ENCODE measurements at regions of chr5 and their contacts with region 1.

Region 1: GRCh38 chr5:76175051-76175666 is 92.0 kb downstream of the SV2C start:
- DNase-seq: peak; percentile 80
- H3K4me3 ChIP-seq: peak overlapping the region in 1 of 2 experiments; percentile 6; a peak in 2 of 4 replicates
- H3K27ac ChIP-seq: peak overlapping the region in 1 of 2 experiments; percentile 85; a peak in 2 of 4 replicates
- H3K4me1 ChIP-seq: peaks cover 0 to 37% of the 10 kb centered on the region in 2 experiments; a peak in 2 of 4 replicates
- H3K27me3 ChIP-seq: no peaks in the 10 kb centered on the region
- CTCF ChIP-seq: peak; percentile 89
- EP300 ChIP-seq: no peak
- RAD21 ChIP-seq: peak; percentile 92

Region 2: GRCh38 chr5:75824323-75824722 is 350.8 kb before region 1 on chr5:
- CTCF ChIA-PET with region 1: no interaction called
- POLR2A ChIA-PET with region 1: no interaction called
- DNase-seq: no peak
- H3K4me3 ChIP-seq: no peak overlapping the region
- H3K27ac ChIP-seq: no peak overlapping the region
- H3K4me1 ChIP-seq: no peaks in the 10 kb centered on the region; a peak in 1 of 4 replicates
- H3K27me3 ChIP-seq: no peaks in the 10 kb centered on the region
- CTCF ChIP-seq: no peak
- EP300 ChIP-seq: no peak
- RAD21 ChIP-seq: no peak

Region 3: GRCh38 chr5:75885849-75886598 is 289.1 kb before region 1 on chr5:
- CTCF ChIA-PET with region 1: interaction called, 44 read pairs
- POLR2A ChIA-PET with region 1: interaction called, 8 read pairs
- DNase-seq: peak; percentile 17
- H3K4me3 ChIP-seq: no peak overlapping the region
- H3K27ac ChIP-seq: no peak overlapping the region
- H3K4me1 ChIP-seq: peaks cover 0 to 4% of the 10 kb centered on the region in 2 experiments; a peak in 2 of 4 replicates
- H3K27me3 ChIP-seq: no peaks in the 10 kb centered on the region
- CTCF ChIP-seq: 0 out of 2 replicates have a peak, but pooled peaks have one; percentile 19
- EP300 ChIP-seq: no peak
- RAD21 ChIP-seq: peak; percentile 80

Region 4: GRCh38 chr5:76104027-76104426 is 71.1 kb before region 1 on chr5:
- CTCF ChIA-PET with region 1: interaction called, 12 read pairs
- POLR2A ChIA-PET with region 1: no interaction called
- DNase-seq: no peak
- H3K4me3 ChIP-seq: no peak overlapping the region
- H3K27ac ChIP-seq: no peak overlapping the region
- H3K4me1 ChIP-seq: peaks cover 0 to 4% of the 10 kb centered on the region in 2 experiments; a peak in 2 of 4 replicates
- H3K27me3 ChIP-seq: no peaks in the 10 kb centered on the region
- CTCF ChIP-seq: no peak
- EP300 ChIP-seq: no peak
- RAD21 ChIP-seq: no peak

Region 5: DNA sequence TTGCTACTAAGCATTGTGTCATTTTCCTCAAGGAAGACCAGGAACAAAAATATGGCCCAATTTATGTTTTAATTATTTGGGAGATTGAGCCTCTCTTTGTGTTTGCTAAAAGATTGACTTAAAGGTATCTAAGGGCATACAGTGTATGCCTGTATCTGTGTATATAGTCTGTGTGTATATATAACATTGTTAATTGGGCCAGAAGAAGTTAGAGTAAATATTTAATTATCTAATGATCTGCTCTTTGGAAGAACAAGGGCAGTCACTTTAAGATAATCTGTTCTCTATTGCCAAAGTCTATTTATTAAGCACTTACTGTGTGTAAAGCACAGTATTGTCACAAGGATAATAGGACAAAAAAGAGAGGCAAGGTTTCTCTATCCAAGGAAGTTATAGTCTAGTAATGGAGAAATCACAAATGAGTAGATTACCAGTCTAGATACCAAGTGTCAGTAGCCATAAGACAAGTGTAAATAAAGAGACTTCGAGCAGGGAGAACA is 40.6 kb before region 1 on chr5:
- CTCF ChIA-PET with region 1: interaction called, 13 read pairs
- POLR2A ChIA-PET with region 1: interaction called, 3 read pairs
- DNase-seq: no peak
- H3K4me3 ChIP-seq: no peak overlapping the region
- H3K27ac ChIP-seq: peak overlapping the region in 1 of 2 experiments; percentile 93; a peak in 2 of 4 replicates
- H3K4me1 ChIP-seq: peaks cover 0 to 51% of the 10 kb centered on the region in 2 experiments; a peak in 2 of 4 replicates
- H3K27me3 ChIP-seq: no peaks in the 10 kb centered on the region
- CTCF ChIP-seq: no peak
- EP300 ChIP-seq: no peak
- RAD21 ChIP-seq: no peak

Region 6: DNA sequence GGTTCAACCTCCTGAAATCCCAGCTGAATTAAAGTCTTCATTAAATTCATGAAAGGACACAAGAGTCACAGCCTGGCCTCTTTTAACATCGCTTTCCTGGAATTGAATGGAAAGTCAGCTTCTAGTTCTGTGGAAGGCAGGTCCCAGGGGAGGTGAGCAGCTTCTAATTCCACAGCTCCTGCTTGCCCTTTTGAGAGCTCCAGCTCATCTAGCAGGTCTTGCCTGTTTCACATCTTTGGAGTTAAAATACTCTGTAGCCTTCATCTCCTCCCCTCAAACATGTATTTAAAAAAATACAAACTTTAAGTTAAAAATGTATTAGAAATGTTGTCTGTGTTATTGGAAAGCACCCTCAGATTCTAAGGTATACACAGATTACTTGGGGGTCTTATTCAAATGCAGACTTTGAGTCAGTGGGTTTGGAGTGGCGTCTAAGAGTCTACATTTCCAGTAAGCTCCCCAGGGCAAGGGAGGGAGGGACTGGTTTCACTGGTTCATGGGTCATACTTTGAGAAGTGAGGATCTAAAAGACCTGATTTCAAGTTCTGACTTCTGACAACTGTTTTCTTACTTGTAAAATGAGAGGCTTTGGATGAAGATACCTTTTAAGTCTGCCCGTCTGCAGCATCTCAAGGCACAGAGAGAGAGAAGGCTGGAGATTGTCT is 16.8 kb after region 1 on chr5:
- CTCF ChIA-PET with region 1: interaction called, 14 read pairs
- POLR2A ChIA-PET with region 1: no interaction called
- DNase-seq: no peak
- H3K4me3 ChIP-seq: no peak overlapping the region
- H3K27ac ChIP-seq: peak overlapping the region in 1 of 2 experiments; percentile 83; a peak in 2 of 4 replicates
- H3K4me1 ChIP-seq: peaks cover 0 to 10% of the 10 kb centered on the region in 2 experiments; a peak in 1 of 4 replicates
- H3K27me3 ChIP-seq: no peaks in the 10 kb centered on the region
- CTCF ChIP-seq: no peak
- EP300 ChIP-seq: no peak
- RAD21 ChIP-seq: no peak

Region 7: GRCh38 chr5:76256116-76256889 is 81.1 kb after region 1 on chr5:
- CTCF ChIA-PET with region 1: interaction called, 25 read pairs
- POLR2A ChIA-PET with region 1: interaction called, 5 read pairs
- DNase-seq: peak; percentile 71
- H3K4me3 ChIP-seq: peak overlapping the region in 1 of 2 experiments; percentile 28; a peak in 1 of 4 replicates
- H3K27ac ChIP-seq: peak overlapping the region in 1 of 2 experiments; percentile 31; a peak in 1 of 4 replicates
- H3K4me1 ChIP-seq: peaks cover 0 to 9% of the 10 kb centered on the region in 2 experiments; a peak in 1 of 4 replicates
- H3K27me3 ChIP-seq: no peaks in the 10 kb centered on the region
- CTCF ChIP-seq: peak; percentile 69
- EP300 ChIP-seq: no peak
- RAD21 ChIP-seq: peak; percentile 98